Activated CD4-positive, alpha-beta memory T cell treated with anti-CD3 and anti-CD28 coated beads, Interleukin-2, amount 10 ng/mL, durations not matched to agents 7 days and 5 days (primary cell): ENCODE measurements at regions of chr17 and their contacts with region 1.

Region 1: GRCh38 chr17:28357061-28357900 is at the start of gene POLDIP2:
- DNase-seq: peak; percentile 97
- H3K4me3 Mint-ChIP-seq: peak within 1 kb of the TSS; percentile 95
- H3K27ac Mint-ChIP-seq: peak within 1 kb of the TSS; percentile 86
- H3K4me1 Mint-ChIP-seq: peaks cover 38% of the 10 kb centered on the region
- H3K27me3 Mint-ChIP-seq: no peaks in the 10 kb centered on the region
- total RNA-seq, gene POLDIP2: 54.3 to 56.2 TPM

Region 2: GRCh38 chr17:28282596-28282995 is 74.7 kb before region 1 on chr17:
- CTCF ChIA-PET with region 1: no interaction called
- POLR2A ChIA-PET with region 1: no interaction called
- DNase-seq: no peak
- H3K4me3 Mint-ChIP-seq: no peak overlapping the region
- H3K27ac Mint-ChIP-seq: no peak overlapping the region
- H3K4me1 Mint-ChIP-seq: peaks cover 11% of the 10 kb centered on the region
- H3K27me3 Mint-ChIP-seq: peaks cover 42% of the 10 kb centered on the region

Region 3: GRCh38 chr17:28318759-28319660 is 38.3 kb before region 1 on chr17 and contains the start of gene TMEM97:
- CTCF ChIA-PET with region 1: interaction called, 3 read pairs
- POLR2A ChIA-PET with region 1: interaction called, 30 read pairs
- DNase-seq: peak; percentile 95
- H3K4me3 Mint-ChIP-seq: peak within 1 kb of the TSS; percentile 89
- H3K27ac Mint-ChIP-seq: peak within 1 kb of the TSS; percentile 55
- H3K4me1 Mint-ChIP-seq: peaks cover 41% of the 10 kb centered on the region
- H3K27me3 Mint-ChIP-seq: no peaks in the 10 kb centered on the region
- total RNA-seq, gene TMEM97: 23.3 to 26.6 TPM

Region 4: GRCh38 chr17:28346746-28347246 is 10.5 kb before region 1 on chr17:
- CTCF ChIA-PET with region 1: no interaction called
- POLR2A ChIA-PET with region 1: interaction called, 37 read pairs
- DNase-seq: no peak
- H3K4me3 Mint-ChIP-seq: no peak overlapping the region
- H3K27ac Mint-ChIP-seq: no peak overlapping the region
- H3K4me1 Mint-ChIP-seq: no peaks in the 10 kb centered on the region
- H3K27me3 Mint-ChIP-seq: no peaks in the 10 kb centered on the region

Region 5: GRCh38 chr17:28371245-28372202 is 14.2 kb after region 1 on chr17 and contains the start of gene SARM1:
- CTCF ChIA-PET with region 1: interaction called, 7 read pairs
- POLR2A ChIA-PET with region 1: interaction called, 80 read pairs
- DNase-seq: peak; percentile 90
- H3K4me3 Mint-ChIP-seq: peak within 1 kb of the TSS; percentile 90
- H3K27ac Mint-ChIP-seq: peak within 1 kb of the TSS; percentile 77
- H3K4me1 Mint-ChIP-seq: peaks cover 23% of the 10 kb centered on the region
- H3K27me3 Mint-ChIP-seq: no peaks in the 10 kb centered on the region
- total RNA-seq, gene SARM1: 17.2 to 17.5 TPM

Region 6: GRCh38 chr17:28384281-28385036 is 27.2 kb after region 1 on chr17:
- CTCF ChIA-PET with region 1: interaction called, 3 read pairs
- POLR2A ChIA-PET with region 1: interaction called, 36 read pairs
- DNase-seq: peak; percentile 80
- H3K4me3 Mint-ChIP-seq: peak overlapping the region; percentile 86
- H3K27ac Mint-ChIP-seq: peak overlapping the region; percentile 78
- H3K4me1 Mint-ChIP-seq: peaks cover 32% of the 10 kb centered on the region
- H3K27me3 Mint-ChIP-seq: no peaks in the 10 kb centered on the region

Region 7: GRCh38 chr17:28457890-28458289 is 100.6 kb after region 1 on chr17:
- CTCF ChIA-PET with region 1: no interaction called
- POLR2A ChIA-PET with region 1: no interaction called
- DNase-seq: no peak
- H3K4me3 Mint-ChIP-seq: no peak overlapping the region
- H3K27ac Mint-ChIP-seq: no peak overlapping the region
- H3K4me1 Mint-ChIP-seq: no peaks in the 10 kb centered on the region
- H3K27me3 Mint-ChIP-seq: peaks cover 3% of the 10 kb centered on the region